A549 (cell line): ENCODE measurements at regions of chr14 and their contacts with region 1.

Region 1: DNA sequence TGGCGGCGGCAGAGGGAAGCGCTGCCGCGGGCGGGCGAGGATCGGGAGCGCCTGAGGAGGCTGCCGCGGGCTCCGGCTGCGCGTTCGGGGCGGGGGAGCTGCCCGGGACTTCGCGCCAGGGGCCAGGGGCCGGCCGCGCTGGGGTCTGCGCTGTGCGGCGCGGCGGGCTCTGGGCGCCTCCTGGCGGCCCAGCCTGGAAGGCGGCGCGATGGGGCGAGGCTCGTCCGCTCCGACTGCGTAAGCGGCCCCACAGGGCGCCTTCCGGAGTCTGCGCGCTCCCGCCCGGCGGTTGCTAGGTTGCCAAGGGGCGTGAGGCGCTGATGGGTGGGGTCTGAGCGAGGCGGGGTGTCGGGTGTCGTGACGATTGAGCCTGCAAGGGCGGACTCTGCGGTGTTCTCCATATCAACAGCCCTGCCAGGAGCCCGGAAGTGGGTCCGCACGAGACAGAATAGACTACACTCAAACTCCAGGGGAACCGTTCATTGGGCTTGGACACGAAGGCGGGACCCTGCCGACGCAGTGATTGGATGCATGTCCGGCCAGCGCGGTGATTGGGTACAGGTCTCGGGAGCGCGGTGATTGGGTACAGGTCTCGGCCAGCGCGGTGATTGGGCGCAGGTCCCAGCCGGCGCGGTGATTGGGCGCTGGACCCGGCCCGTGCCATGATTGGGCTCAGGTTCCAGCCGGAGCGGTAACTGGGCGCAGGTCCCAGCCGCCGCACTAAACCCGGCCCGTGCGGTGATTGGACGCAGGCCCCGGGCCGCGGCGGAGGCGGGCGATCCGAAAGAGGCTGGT is at the start of gene TEDC1:
- DNase-seq: peak; percentile 96 to 100
- ATAC-seq: peak; percentile 60 to 77
- H3K4me3 ChIP-seq: peak within 1 kb of the TSS; percentile 74
- H3K27ac ChIP-seq: peak within 1 kb of the TSS; percentile 84 to 99
- H3K4me1 ChIP-seq: peaks cover 36% of the 10 kb centered on the region
- CTCF ChIP-seq: peak; percentile 95
- EP300 ChIP-seq: no peak
- POLR2A ChIP-seq: no peak; the same call in none of the 2 replicates
- RAD21 ChIP-seq: peak; percentile 50 to 89; a peak in 4 of 5 replicates
- polyA plus RNA-seq, gene TEDC1: 12.7 and 13.4 TPM in 2 replicates

Region 2: DNA sequence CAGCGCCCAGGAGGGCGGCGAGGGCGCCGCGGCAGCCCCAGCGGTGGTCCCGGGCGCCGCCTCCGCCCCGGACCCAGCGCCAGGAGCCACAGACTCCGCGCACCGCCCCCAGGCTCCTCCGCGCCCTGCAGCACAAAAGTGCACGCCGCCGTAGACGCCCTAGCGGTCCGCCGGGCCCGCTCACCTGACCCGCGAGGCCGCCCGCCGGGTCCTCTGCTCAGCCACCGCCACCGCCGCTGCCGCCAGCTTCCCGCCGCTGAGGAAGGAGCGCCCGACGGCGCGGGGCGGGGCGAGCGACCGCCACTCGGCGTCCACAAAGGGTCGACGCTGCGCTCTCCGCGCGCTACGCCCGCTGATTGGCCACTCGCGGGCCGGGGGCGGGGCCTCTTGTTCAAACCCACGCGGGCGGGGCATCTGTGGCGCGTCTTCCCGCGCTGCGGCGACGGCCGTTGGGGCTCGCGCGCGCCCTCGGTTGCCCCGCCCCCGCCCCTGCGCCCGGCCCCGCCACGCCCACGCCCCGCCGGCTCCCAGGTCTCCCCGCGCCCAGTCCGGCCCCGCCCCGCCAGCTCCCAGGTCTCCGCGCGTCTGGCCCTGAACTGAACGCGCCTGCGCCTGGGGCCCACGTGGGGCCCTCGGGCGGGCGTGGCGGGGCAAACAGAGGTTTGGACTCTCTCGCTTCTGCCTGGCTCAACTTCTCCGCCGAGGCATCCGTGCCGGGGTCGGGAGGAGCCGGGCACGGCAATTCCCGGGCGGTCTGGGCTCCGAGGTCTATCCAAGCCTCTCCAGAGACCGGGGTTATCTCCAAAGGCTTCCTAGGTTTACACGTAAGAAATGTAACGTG is 469.7 kb before region 1 on chr14 and contains the start of gene CDCA4:
- CTCF ChIA-PET with region 1: no interaction called
- POLR2A ChIA-PET with region 1: no interaction called
- DNase-seq: peak; percentile 96 to 97
- ATAC-seq: peak; percentile 81 to 84
- H3K4me3 ChIP-seq: peak within 1 kb of the TSS; percentile 97
- H3K27ac ChIP-seq: peak within 1 kb of the TSS; percentile 97 to 98
- H3K4me1 ChIP-seq: peaks cover 75% of the 10 kb centered on the region
- CTCF ChIP-seq: no peak
- EP300 ChIP-seq: no peak
- POLR2A ChIP-seq: peak; percentile 71
- RAD21 ChIP-seq: no peak
- polyA plus RNA-seq, gene CDCA4: 19.5 and 24.2 TPM in 2 replicates

Region 3: GRCh38 chr14:105368965-105369652 is 121.7 kb before region 1 on chr14:
- CTCF ChIA-PET with region 1: interaction called, 30 read pairs
- POLR2A ChIA-PET with region 1: interaction called, 6 read pairs
- DNase-seq: no peak
- ATAC-seq: no peak
- H3K4me3 ChIP-seq: no peak overlapping the region
- H3K27ac ChIP-seq: no peak overlapping the region
- H3K4me1 ChIP-seq: no peaks in the 10 kb centered on the region
- CTCF ChIP-seq: no peak
- EP300 ChIP-seq: no peak
- POLR2A ChIP-seq: no peak
- RAD21 ChIP-seq: no peak

Region 4: DNA sequence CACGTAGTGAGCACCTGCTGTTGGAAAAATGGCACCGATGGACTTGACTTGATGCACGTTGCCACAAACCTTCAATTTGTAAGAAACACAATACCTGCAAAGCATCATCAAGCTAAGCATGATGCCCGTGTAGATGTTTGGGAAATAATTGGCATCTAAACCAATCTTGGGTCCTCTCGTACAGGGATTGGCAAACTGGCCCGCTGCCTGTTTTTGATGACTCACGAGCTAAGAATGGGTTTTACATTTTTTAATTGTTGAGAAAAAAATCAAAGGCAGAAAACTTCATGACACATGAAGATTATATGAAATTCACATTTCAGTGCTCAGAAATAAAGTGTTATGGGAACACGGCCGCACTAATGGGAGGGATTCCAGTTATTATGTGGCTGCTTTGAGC is 60.2 kb before region 1 on chr14:
- CTCF ChIA-PET with region 1: interaction called, 17 read pairs
- POLR2A ChIA-PET with region 1: no interaction called
- DNase-seq: peak in 1 of 2 experiments; percentile 36
- ATAC-seq: peak in 1 of 2 experiments; percentile 20; a peak in 1 of 6 replicates
- H3K4me3 ChIP-seq: no peak overlapping the region
- H3K27ac ChIP-seq: peak overlapping the region in 1 of 2 experiments; percentile 39; a peak in 3 of 6 replicates
- H3K4me1 ChIP-seq: peaks cover 23% of the 10 kb centered on the region
- CTCF ChIP-seq: no peak
- EP300 ChIP-seq: no peak
- POLR2A ChIP-seq: no peak
- RAD21 ChIP-seq: no peak

Region 5: DNA sequence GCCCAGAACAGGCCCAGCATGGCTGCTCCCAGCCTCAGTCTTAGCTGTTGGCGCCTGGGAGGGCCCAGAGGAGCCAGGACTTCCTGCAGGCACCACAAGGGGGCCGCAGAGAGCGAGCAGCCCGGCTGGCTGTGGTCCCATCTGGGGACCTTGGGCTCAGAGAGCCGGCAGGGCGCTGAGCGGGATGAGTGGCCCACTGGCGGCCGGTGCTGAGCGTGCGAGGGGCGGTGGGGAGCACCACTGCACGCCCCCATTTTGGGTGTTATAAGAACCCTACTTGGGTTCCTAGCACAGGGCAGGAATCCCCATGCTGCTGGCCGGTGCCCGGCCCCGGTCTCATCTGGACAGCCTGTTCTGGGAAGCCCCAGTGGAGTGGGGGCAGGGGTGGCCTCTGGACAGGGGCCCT is 42.1 kb before region 1 on chr14:
- CTCF ChIA-PET with region 1: interaction called, 21 read pairs
- POLR2A ChIA-PET with region 1: interaction called, 4 read pairs
- DNase-seq: peak; percentile 67 to 87
- ATAC-seq: peak; percentile 83 to 93
- H3K4me3 ChIP-seq: no peak overlapping the region
- H3K27ac ChIP-seq: peak overlapping the region in 1 of 2 experiments; percentile 29; a peak in 3 of 6 replicates
- H3K4me1 ChIP-seq: 0 out of 3 replicates have a peak, but pooled peaks cover 6% of the 10 kb centered on the region
- CTCF ChIP-seq: peak; percentile 67
- EP300 ChIP-seq: no peak
- POLR2A ChIP-seq: no peak
- RAD21 ChIP-seq: peak; percentile 52 to 54

Region 6: GRCh38 chr14:105527661-105528581 is 37.2 kb after region 1 on chr14:
- CTCF ChIA-PET with region 1: interaction called, 25 read pairs
- POLR2A ChIA-PET with region 1: interaction called, 5 read pairs
- DNase-seq: peak; percentile 76 to 81
- ATAC-seq: peak; percentile 45 to 80
- H3K4me3 ChIP-seq: peak overlapping the region; percentile 52
- H3K27ac ChIP-seq: peak overlapping the region; percentile 92 to 96
- H3K4me1 ChIP-seq: peaks cover 21% of the 10 kb centered on the region
- CTCF ChIP-seq: peak; percentile 89
- EP300 ChIP-seq: no peak
- POLR2A ChIP-seq: peak; percentile 20; the same call in 1 of the 2 replicates
- RAD21 ChIP-seq: peak; percentile 80 to 92